GM13976 (cell line): ENCODE measurements at regions of chrX and their contacts with region 1.

Region 1: GRCh38 chrX:73855546-73855945 is 292.5 kb downstream of the CHIC1 start:
- DNase-seq: peak; percentile 41
- CTCF ChIP-seq: peak; percentile 86

Region 2: GRCh38 chrX:73765771-73766430 is 89.6 kb before region 1 on chrX:
- in situ Hi-C with region 1: no loop called
- DNase-seq: no peak
- CTCF ChIP-seq: no peak

Region 3: GRCh38 chrX:74015379-74016019 is 160.0 kb after region 1 on chrX:
- in situ Hi-C with region 1: loop called (anchors 5 kb)
- DNase-seq: peak; percentile 59
- CTCF ChIP-seq: peak; percentile 82

Region 4: GRCh38 chrX:74133156-74133796 is 277.7 kb after region 1 on chrX:
- in situ Hi-C with region 1: loop called (anchors 5 kb)
- DNase-seq: peak; percentile 52
- CTCF ChIP-seq: peak; percentile 51

Region 5: GRCh38 chrX:74343343-74344279 is 488.1 kb after region 1 on chrX:
- in situ Hi-C with region 1: loop called (anchors 25 kb)
- DNase-seq: peak; percentile 36
- CTCF ChIP-seq: peak; percentile 63

Region 6: GRCh38 chrX:74536152-74536831 is 680.7 kb after region 1 on chrX:
- in situ Hi-C with region 1: loop called (anchors 25 kb)
- DNase-seq: peak; percentile 75
- CTCF ChIP-seq: no peak